ENCODE measurements at regions of chr1 and their contacts with region 1.

Region 1: DNA sequence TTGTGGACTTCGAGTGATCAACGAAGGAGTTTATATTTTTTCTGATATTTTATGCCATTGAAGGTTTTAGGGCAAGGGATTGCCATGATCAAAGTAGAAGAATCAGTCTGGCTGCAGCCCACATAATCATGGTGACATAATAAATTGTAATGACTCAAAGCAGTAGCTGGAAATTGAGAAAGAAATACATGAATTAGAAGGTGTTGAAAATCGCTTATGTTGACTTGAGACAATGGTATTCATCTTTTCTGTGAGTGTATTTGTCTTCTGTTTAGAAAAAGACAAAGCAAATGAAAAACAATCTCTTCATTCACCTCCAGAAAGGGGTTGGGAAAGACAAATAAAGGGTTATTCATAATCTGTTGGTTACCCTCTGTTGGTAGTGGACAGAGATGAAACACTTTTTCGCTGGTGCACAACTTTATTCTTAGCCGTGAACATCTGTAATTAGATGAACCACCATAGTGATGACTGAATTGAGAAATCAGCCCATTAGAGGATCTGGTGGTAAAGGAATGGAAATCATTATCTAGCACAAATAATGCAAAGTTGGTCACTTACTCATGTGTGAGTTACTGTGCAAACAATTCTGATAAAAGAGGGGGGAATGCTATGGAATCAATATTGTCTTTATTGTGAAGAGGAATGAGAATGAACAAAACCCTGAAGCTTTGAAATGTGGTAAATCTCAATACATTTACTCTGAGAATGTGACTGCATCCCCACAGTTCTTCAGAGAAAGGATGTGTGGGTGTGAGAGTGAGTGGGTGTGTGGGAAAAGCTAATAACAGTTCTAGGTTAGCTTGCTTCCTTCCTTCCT is 121.8 kb downstream of the NTNG1 start:
- DNase-seq: no peak
- ATAC-seq: no peak

Region 2: GRCh38 chr1:107213225-107213624 is 49.5 kb before region 1 on chr1:
- intact Hi-C with region 1: loop called (anchors 2 kb)
- DNase-seq: no peak
- ATAC-seq: no peak

Measured in sciatic nerve (tissue), 2 donors.